ENCODE measurements at regions of chr18 and their contacts with region 1.

Region 1: GRCh38 chr18:56727399-56727798 is 76.2 kb downstream of the WDR7 start:
- DNase-seq: no peak
- ATAC-seq: no peak

Region 2: GRCh38 chr18:57881818-57882413 is 1154.5 kb after region 1 on chr18:
- intact Hi-C with region 1: loop called (anchors 5 kb)
- DNase-seq: peak; percentile 76
- ATAC-seq: peak; percentile 94

Measured in sciatic nerve (tissue), 2 donors.